ENCODE measurements at regions of chr13 and their contacts with region 1.

Region 1: GRCh38 chr13:113458253-113459065 is 5.2 kb upstream of the ADPRHL1 start:
- DNase-seq: peak; percentile 89
- H3K4me3 ChIP-seq: no peak overlapping the region
- H3K27ac ChIP-seq: peak overlapping the region in 1 of 2 experiments; percentile 36; a peak in 1 of 4 replicates
- H3K4me1 ChIP-seq: peaks cover 0 to 22% of the 10 kb centered on the region in 2 experiments; a peak in 3 of 4 replicates
- H3K27me3 ChIP-seq: no peaks in the 10 kb centered on the region
- CTCF ChIP-seq: peak; percentile 64
- EP300 ChIP-seq: no peak
- RAD21 ChIP-seq: peak; percentile 62

Region 2: DNA sequence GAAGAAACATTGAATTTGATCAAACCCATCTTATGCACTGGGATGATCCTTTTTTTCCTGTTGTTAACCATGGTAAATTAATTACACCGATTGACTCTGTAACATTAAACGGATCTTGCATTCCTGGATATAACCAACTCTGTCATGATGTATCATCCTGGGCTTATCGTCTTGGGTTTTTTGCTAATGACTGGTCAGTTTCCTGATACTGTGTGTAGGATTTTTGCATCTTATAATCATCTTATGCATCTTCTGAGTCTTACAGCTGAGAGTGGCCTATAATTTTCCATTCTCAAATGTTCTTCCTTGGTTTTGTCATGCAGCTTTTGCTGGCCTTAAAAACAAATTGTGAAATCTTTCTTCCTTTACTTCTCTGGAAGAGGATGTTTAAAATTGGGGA is 19.3 kb after region 1 on chr13:
- CTCF ChIA-PET with region 1: interaction called, 30 read pairs
- POLR2A ChIA-PET with region 1: interaction called, 3 read pairs
- DNase-seq: no peak
- H3K4me3 ChIP-seq: no peak overlapping the region
- H3K27ac ChIP-seq: no peak overlapping the region
- H3K4me1 ChIP-seq: no peaks in the 10 kb centered on the region; a peak in 1 of 4 replicates
- H3K27me3 ChIP-seq: no peaks in the 10 kb centered on the region
- CTCF ChIP-seq: no peak
- EP300 ChIP-seq: no peak
- RAD21 ChIP-seq: no peak

Region 3: GRCh38 chr13:113490496-113491417 is 32.3 kb after region 1 on chr13 and contains the start of gene DCUN1D2:
- CTCF ChIA-PET with region 1: interaction called, 41 read pairs
- POLR2A ChIA-PET with region 1: no interaction called
- DNase-seq: peak; percentile 99
- H3K4me3 ChIP-seq: peak within 1 kb of the TSS; percentile 65 to 83
- H3K27ac ChIP-seq: peak within 1 kb of the TSS; percentile 84 to 87
- H3K4me1 ChIP-seq: peaks cover 24 to 49% of the 10 kb centered on the region in 2 experiments; a peak in 3 of 4 replicates
- H3K27me3 ChIP-seq: no peaks in the 10 kb centered on the region
- CTCF ChIP-seq: no peak
- EP300 ChIP-seq: 0 out of 4 replicates have a peak, but pooled peaks of 1 of the 2 experiments have one; percentile 8
- RAD21 ChIP-seq: no peak
- polyA plus RNA-seq, gene DCUN1D2: 11.0 and 13.0 TPM in 2 replicates

Region 4: DNA sequence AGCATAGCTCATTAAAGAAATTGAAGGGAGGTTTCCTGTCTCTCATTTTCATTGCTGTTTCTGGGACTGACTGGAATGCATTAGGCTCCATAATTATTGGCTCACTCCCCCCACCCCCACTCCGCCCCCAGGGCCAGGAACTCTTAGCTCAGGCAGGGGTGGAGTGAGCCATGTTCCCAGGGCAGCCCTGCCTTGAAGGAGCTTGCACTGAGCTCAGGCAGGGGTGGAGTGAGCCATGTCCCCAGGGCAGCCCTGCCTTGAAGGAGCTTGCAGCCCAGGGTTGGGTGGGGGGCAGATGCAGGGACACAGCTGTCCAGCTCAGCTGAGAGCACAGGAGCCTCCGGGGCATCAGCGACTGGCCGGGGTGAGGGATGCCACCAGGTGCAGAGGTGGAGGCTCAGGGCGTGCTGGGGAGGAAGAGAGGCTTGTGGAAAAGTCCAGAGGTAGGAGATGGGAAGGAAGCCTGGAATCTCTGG is 87.0 kb after region 1 on chr13:
- CTCF ChIA-PET with region 1: interaction called, 25 read pairs
- POLR2A ChIA-PET with region 1: no interaction called
- DNase-seq: peak; percentile 59
- H3K4me3 ChIP-seq: no peak overlapping the region
- H3K27ac ChIP-seq: peak overlapping the region in 1 of 2 experiments; percentile 99; a peak in 2 of 4 replicates
- H3K4me1 ChIP-seq: peaks cover 0 to 72% of the 10 kb centered on the region in 2 experiments; a peak in 2 of 4 replicates
- H3K27me3 ChIP-seq: no peaks in the 10 kb centered on the region
- CTCF ChIP-seq: no peak
- EP300 ChIP-seq: no peak
- RAD21 ChIP-seq: no peak

Region 5: DNA sequence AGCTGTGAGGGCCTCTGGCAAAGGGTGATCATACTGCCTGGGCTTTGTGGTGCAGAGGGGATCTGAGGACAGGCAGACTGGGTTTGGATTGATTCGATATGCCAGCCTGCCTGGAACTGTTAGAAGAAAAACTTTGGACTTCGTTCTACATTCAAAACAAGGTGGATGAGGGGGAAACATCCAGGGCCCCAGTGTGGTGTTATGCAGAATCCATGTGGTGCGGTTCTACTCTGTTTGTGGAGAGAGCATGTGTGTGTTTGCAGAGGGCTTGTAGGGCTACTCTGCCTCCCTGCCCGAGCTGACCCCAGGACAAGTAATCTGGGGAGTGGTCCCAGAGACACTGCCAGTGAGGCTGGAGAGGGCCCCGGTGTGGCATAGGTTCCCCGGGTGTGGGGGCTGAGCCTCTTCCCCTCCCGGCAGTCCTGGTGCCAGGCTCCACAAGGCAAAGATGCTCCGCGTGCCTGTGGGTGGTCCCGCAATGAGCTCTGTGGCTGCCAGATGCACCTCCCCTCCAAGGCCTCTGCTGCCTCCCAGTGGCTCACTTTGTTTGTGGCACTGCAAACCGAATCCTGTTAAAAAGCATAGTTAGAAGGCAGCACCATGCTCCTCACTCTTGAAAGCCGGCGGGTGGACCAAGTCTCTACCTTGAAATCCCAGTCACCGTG is 103.8 kb after region 1 on chr13:
- CTCF ChIA-PET with region 1: interaction called, 128 read pairs
- POLR2A ChIA-PET with region 1: interaction called, 3 read pairs
- DNase-seq: peak; percentile 90
- H3K4me3 ChIP-seq: peak overlapping the region in 1 of 2 experiments; percentile 20; a peak in 1 of 4 replicates
- H3K27ac ChIP-seq: no peak overlapping the region
- H3K4me1 ChIP-seq: peaks cover 0 to 8% of the 10 kb centered on the region in 2 experiments; a peak in 1 of 4 replicates
- H3K27me3 ChIP-seq: no peaks in the 10 kb centered on the region
- CTCF ChIP-seq: peak; percentile 74
- EP300 ChIP-seq: no peak
- RAD21 ChIP-seq: peak; percentile 96